PC-3 (cell line): ENCODE measurements at regions of chr3 and their contacts with region 1.

Region 1: GRCh38 chr3:155805802-155806618 is at the start of gene C3orf33:
- DNase-seq: peak; percentile 69
- ATAC-seq: peak; percentile 95
- H3K4me3 ChIP-seq: peak within 1 kb of the TSS; percentile 86
- H3K27ac ChIP-seq: peak within 1 kb of the TSS; percentile 24; the same call in 1 of the 2 replicates
- H3K4me1 ChIP-seq: peaks cover 4% of the 10 kb centered on the region; the same call in 1 of the 2 replicates
- H3K27me3 ChIP-seq: no peaks in the 10 kb centered on the region
- CTCF ChIP-seq: peak; percentile 95
- total RNA-seq, gene C3orf33: 3.5 and 3.6 TPM in 2 replicates

Region 2: GRCh38 chr3:155302481-155302880 is 503.5 kb before region 1 on chr3:
- CTCF ChIA-PET with region 1: no interaction called
- POLR2A ChIA-PET with region 1: no interaction called
- intact Hi-C with region 1: no loop called
- DNase-seq: peak; percentile 61
- ATAC-seq: peak; percentile 65
- H3K4me3 ChIP-seq: no peak overlapping the region
- H3K27ac ChIP-seq: no peak overlapping the region
- H3K4me1 ChIP-seq: peaks cover 13% of the 10 kb centered on the region
- H3K27me3 ChIP-seq: no peaks in the 10 kb centered on the region
- CTCF ChIP-seq: no peak

Region 3: GRCh38 chr3:155572085-155572484 is 233.9 kb before region 1 on chr3:
- CTCF ChIA-PET with region 1: no interaction called
- POLR2A ChIA-PET with region 1: no interaction called
- intact Hi-C with region 1: no loop called
- DNase-seq: peak; percentile 24
- ATAC-seq: peak; percentile 74
- H3K4me3 ChIP-seq: no peak overlapping the region
- H3K27ac ChIP-seq: no peak overlapping the region
- H3K4me1 ChIP-seq: no peaks in the 10 kb centered on the region
- H3K27me3 ChIP-seq: no peaks in the 10 kb centered on the region
- CTCF ChIP-seq: no peak

Region 4: GRCh38 chr3:155676252-155676981 is 129.6 kb before region 1 on chr3:
- CTCF ChIA-PET with region 1: no interaction called
- POLR2A ChIA-PET with region 1: no interaction called
- intact Hi-C with region 1: no loop called
- DNase-seq: peak; percentile 58
- ATAC-seq: peak; percentile 89
- H3K4me3 ChIP-seq: peak overlapping the region; percentile 57
- H3K27ac ChIP-seq: no peak overlapping the region
- H3K4me1 ChIP-seq: 0 out of 2 replicates have a peak, but pooled peaks cover 6% of the 10 kb centered on the region
- H3K27me3 ChIP-seq: no peaks in the 10 kb centered on the region
- CTCF ChIP-seq: no peak

Region 5: DNA sequence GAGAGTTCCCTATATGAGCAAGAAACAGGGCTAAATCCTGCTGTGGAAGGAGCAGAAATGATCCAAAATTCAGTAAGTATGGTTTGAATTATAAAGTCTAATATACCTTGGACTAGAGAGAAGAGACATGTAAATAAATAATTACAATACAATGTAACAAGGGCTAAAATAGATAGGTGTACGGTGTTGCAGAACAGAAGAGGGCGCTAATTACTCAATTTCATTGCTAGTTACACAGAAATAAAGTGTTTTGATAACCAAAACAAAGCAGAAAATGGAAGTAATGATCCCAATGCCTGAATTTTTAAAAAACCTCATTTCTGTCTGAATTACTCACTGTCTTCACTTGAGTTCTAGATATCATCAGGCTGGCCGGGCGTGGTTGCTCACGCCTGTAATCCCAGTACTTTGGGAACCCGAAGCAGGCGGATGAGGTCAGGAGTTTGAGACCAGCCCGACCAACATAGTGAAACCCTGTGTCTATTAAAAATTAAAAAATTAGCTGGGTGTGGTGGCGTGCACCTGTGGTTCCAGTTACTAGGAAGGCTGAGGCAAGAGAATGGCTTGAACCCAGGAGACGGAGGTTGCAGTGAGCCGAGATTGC is 52.9 kb before region 1 on chr3:
- CTCF ChIA-PET with region 1: interaction called, 6 read pairs
- POLR2A ChIA-PET with region 1: no interaction called
- intact Hi-C with region 1: loop called (anchors 1 kb)
- DNase-seq: peak; percentile 67
- ATAC-seq: peak; percentile 37
- H3K4me3 ChIP-seq: no peak overlapping the region
- H3K27ac ChIP-seq: no peak overlapping the region
- H3K4me1 ChIP-seq: peaks cover 13% of the 10 kb centered on the region
- H3K27me3 ChIP-seq: no peaks in the 10 kb centered on the region
- CTCF ChIP-seq: peak; percentile 84

Region 6: GRCh38 chr3:155778462-155778861 is 27.5 kb before region 1 on chr3:
- CTCF ChIA-PET with region 1: interaction called, 3 read pairs
- POLR2A ChIA-PET with region 1: interaction called, 15 read pairs
- intact Hi-C with region 1: no loop called
- DNase-seq: no peak
- ATAC-seq: no peak
- H3K4me3 ChIP-seq: no peak overlapping the region
- H3K27ac ChIP-seq: no peak overlapping the region
- H3K4me1 ChIP-seq: no peaks in the 10 kb centered on the region
- H3K27me3 ChIP-seq: no peaks in the 10 kb centered on the region
- CTCF ChIP-seq: no peak

Region 7: DNA sequence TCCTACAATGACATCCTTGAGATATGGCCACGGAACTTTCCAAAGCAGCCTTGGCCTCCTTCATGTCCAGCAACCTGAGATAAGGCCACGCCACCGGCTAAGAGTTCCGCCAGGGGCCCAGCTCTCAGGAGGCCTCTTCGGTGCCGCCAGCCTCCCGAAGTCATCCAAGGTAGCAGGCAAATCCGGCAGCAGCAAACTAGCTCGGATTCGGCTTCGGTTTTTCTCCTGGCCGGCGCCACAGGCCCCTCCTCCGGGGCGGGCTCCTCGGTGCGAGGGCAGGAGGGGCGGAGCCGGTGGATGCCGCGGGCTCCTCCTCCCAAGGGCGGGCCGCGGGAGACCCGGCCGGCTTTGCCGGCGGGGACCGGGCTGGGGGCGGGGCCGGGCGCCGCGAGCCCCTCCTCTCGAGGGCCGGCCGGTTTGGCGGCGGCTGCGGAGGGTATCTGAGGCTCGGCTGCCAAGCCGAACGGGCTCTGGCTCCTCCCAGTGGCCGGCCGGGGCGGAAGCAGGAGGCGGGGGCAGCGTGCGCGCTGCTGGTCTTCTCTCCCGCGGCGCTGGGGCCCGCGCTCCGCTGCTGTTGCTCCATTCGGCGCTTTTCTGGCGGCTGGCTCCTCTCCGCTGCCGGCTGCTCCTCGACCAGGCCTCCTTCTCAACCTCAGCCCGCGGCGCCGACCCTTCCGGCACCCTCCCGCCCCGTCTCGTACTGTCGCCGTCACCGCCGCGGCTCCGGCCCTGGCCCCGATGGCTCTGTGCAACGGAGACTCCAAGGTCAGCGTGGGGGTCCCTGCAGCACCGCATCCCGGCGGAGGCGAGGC is 64.3 kb after region 1 on chr3 and contains the start of gene GMPS:
- CTCF ChIA-PET with region 1: interaction called, 13 read pairs
- POLR2A ChIA-PET with region 1: interaction called, 5 read pairs
- intact Hi-C with region 1: no loop called
- DNase-seq: peak; percentile 97
- ATAC-seq: peak; percentile 85
- H3K4me3 ChIP-seq: peak within 1 kb of the TSS; percentile 79
- H3K27ac ChIP-seq: peak within 1 kb of the TSS; percentile 75
- H3K4me1 ChIP-seq: peaks cover 14% of the 10 kb centered on the region
- H3K27me3 ChIP-seq: no peaks in the 10 kb centered on the region
- CTCF ChIP-seq: peak; percentile 33; the same call in 1 of the 2 replicates
- total RNA-seq, gene GMPS: 42.2 and 43.3 TPM in 2 replicates